AG04450 (cell line): ENCODE measurements at regions of chr6 and their contacts with region 1.

Region 1: GRCh38 chr6:52020945-52021570 is 66.4 kb downstream of the PKHD1 start:
- DNase-seq: no peak
- H3K4me3 ChIP-seq: no peak overlapping the region
- H3K27ac ChIP-seq: no peak overlapping the region
- H3K27me3 ChIP-seq: no peaks in the 10 kb centered on the region
- CTCF ChIP-seq: peak; percentile 66

Region 2: GRCh38 chr6:50816115-50816675 is 1204.9 kb before region 1 on chr6:
- CTCF ChIA-PET with region 1: interaction called, 10 read pairs
- POLR2A ChIA-PET with region 1: no interaction called
- DNase-seq: peak; percentile 13
- H3K4me3 ChIP-seq: peak overlapping the region; percentile 59
- H3K27ac ChIP-seq: no peak overlapping the region
- H3K27me3 ChIP-seq: peaks cover 23% of the 10 kb centered on the region
- CTCF ChIP-seq: peak; percentile 81

Region 3: GRCh38 chr6:51814418-51814817 is 206.6 kb before region 1 on chr6:
- CTCF ChIA-PET with region 1: no interaction called
- POLR2A ChIA-PET with region 1: no interaction called
- DNase-seq: no peak
- H3K4me3 ChIP-seq: no peak overlapping the region
- H3K27ac ChIP-seq: no peak overlapping the region
- H3K27me3 ChIP-seq: no peaks in the 10 kb centered on the region
- CTCF ChIP-seq: no peak

Region 4: GRCh38 chr6:51855310-51856082 is 165.6 kb before region 1 on chr6:
- CTCF ChIA-PET with region 1: interaction called, 13 read pairs
- POLR2A ChIA-PET with region 1: no interaction called
- DNase-seq: peak; percentile 1
- H3K4me3 ChIP-seq: no peak overlapping the region
- H3K27ac ChIP-seq: no peak overlapping the region
- H3K27me3 ChIP-seq: no peaks in the 10 kb centered on the region
- CTCF ChIP-seq: peak; percentile 58